PC-3 (cell line): ENCODE measurements at regions of chr6 and their contacts with region 1.

Region 1: DNA sequence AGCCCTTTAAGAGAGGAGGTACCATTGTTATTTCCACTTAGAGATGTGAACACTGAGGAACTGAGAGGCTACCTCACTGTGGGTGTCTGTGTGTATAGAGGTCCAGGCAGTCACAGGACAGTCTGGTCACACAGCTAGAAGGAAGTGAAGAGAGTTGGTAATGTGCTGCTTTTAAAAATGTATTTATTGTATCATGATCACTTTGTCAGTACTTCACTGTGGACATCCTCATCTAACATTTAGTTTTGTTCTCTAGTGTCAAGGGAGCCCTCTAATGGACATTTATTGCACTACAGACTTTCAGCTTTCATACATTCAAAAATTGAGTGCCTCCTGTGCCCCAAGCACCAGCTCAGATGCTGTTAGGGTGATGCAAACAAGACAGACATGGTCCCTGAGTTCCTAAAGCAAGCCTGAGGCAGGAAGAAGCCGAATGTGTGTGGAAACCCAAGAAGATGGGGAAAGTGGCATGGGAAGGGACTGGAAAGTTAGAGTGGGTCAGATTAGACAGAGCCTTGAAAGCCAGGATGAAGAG is 123.0 kb downstream of the SLC16A10 start:
- DNase-seq: peak; percentile 76
- ATAC-seq: peak; percentile 65
- H3K4me3 ChIP-seq: no peak overlapping the region
- H3K27ac ChIP-seq: no peak overlapping the region
- H3K4me1 ChIP-seq: no peaks in the 10 kb centered on the region
- H3K27me3 ChIP-seq: no peaks in the 10 kb centered on the region
- CTCF ChIP-seq: peak; percentile 75

Region 2: GRCh38 chr6:111011360-111012142 is 198.7 kb before region 1 on chr6:
- CTCF ChIA-PET with region 1: interaction called, 3 read pairs
- POLR2A ChIA-PET with region 1: no interaction called
- intact Hi-C with region 1: loop called (anchors 1 kb)
- DNase-seq: peak; percentile 50
- ATAC-seq: peak; percentile 69
- H3K4me3 ChIP-seq: no peak overlapping the region
- H3K27ac ChIP-seq: no peak overlapping the region
- H3K4me1 ChIP-seq: no peaks in the 10 kb centered on the region
- H3K27me3 ChIP-seq: no peaks in the 10 kb centered on the region
- CTCF ChIP-seq: peak; percentile 71

Region 3: GRCh38 chr6:111057074-111057752 is 153.0 kb before region 1 on chr6:
- CTCF ChIA-PET with region 1: interaction called, 5 read pairs
- POLR2A ChIA-PET with region 1: no interaction called
- intact Hi-C with region 1: loop called (anchors 1 kb)
- DNase-seq: peak; percentile 51
- ATAC-seq: peak; percentile 72
- H3K4me3 ChIP-seq: no peak overlapping the region
- H3K27ac ChIP-seq: no peak overlapping the region
- H3K4me1 ChIP-seq: no peaks in the 10 kb centered on the region
- H3K27me3 ChIP-seq: no peaks in the 10 kb centered on the region
- CTCF ChIP-seq: peak; percentile 75

Region 4: DNA sequence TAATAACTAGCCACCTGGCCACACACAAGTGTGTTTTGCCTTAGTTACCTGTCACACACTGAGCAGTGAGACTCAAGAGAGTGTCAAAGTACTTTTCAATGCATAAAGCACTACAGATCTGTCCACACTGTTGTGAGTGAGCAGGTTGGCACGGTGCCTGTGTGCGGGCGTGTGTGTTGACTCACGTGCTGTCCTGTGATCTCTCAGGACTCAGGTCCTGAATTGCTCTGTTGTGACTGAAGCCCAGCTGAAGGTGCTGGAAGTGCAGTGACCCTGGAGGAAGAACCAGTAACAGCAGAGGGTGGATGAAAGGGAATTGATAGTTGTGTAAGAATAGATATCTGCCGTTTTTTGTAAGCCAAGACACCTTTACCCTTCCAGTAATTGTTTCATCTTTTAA is 104.7 kb before region 1 on chr6:
- CTCF ChIA-PET with region 1: no interaction called
- POLR2A ChIA-PET with region 1: no interaction called
- intact Hi-C with region 1: no loop called
- DNase-seq: peak; percentile 64
- ATAC-seq: peak; percentile 61
- H3K4me3 ChIP-seq: no peak overlapping the region
- H3K27ac ChIP-seq: no peak overlapping the region
- H3K4me1 ChIP-seq: peaks cover 7% of the 10 kb centered on the region
- H3K27me3 ChIP-seq: no peaks in the 10 kb centered on the region
- CTCF ChIP-seq: no peak

Region 5: DNA sequence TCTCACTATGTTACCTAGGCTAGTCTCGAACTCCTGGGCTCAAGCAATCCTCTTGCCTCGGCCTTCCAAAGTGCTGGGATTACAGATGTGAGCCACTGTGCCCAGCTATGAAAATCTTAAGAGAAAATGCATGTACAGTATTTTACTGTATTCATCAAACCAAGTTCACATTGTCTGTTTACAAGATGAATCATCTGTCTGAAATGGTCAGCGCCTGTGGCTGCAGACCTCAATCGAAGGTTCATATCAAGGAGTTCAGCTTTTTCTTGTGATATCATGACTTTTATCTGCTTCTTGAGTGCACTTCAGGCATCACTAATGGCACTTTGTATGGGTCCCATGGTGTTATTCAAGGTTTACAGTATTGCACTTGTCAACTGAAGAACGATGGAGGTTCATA is 32.2 kb after region 1 on chr6:
- CTCF ChIA-PET with region 1: no interaction called
- POLR2A ChIA-PET with region 1: no interaction called
- intact Hi-C with region 1: loop called (anchors 1 kb)
- DNase-seq: peak; percentile 56
- ATAC-seq: peak; percentile 90
- H3K4me3 ChIP-seq: no peak overlapping the region
- H3K27ac ChIP-seq: no peak overlapping the region
- H3K4me1 ChIP-seq: peaks cover 19% of the 10 kb centered on the region
- H3K27me3 ChIP-seq: no peaks in the 10 kb centered on the region
- CTCF ChIP-seq: no peak